CD8-positive, alpha-beta T cell (primary cell): ENCODE measurements at regions of chr2 and their contacts with region 1.

Region 1: GRCh38 chr2:227460070-227460485 is 11.9 kb upstream of the AGFG1 start:
- DNase-seq: peak; percentile 14 to 82 (median 65)
- ATAC-seq: peak; percentile 82
- H3K4me3 ChIP-seq: peak overlapping the region in 1 of 2 experiments; percentile 1
- H3K4me3 Mint-ChIP-seq: peak overlapping the region; percentile 15
- H3K27ac ChIP-seq: no peak overlapping the region
- H3K27ac Mint-ChIP-seq: no peak overlapping the region
- H3K4me1 ChIP-seq: peaks cover 52% of the 10 kb centered on the region
- H3K4me1 Mint-ChIP-seq: peaks cover 56% of the 10 kb centered on the region
- H3K27me3 ChIP-seq: peaks cover 0 to 2% of the 10 kb centered on the region in 2 experiments
- H3K27me3 Mint-ChIP-seq: no peaks in the 10 kb centered on the region
- CTCF ChIP-seq: no peak

Region 2: DNA sequence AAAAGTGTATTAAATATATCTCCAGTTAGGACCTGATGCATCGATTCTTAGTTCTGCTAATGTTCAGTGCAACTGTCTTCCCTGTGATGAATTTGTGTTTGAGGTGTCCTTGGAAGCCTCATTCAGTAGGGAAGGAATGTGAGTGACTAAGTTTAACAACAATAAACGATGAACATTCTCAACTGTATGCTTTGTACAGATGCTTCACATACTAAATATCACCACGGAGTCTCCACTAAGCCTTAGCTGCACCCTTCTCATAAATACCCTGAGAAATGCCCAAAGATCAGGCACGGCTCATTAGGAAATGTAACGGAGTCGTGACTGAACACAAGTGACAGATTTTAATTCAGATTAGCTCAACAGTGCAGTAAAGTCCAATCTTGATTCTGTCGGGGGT is 12.5 kb before region 1 on chr2:
- CTCF ChIA-PET with region 1: no interaction called
- POLR2A ChIA-PET with region 1: no interaction called
- intact Hi-C with region 1: no loop called
- DNase-seq: no peak
- ATAC-seq: no peak
- H3K4me3 ChIP-seq: no peak overlapping the region
- H3K4me3 Mint-ChIP-seq: no peak overlapping the region
- H3K27ac ChIP-seq: no peak overlapping the region
- H3K27ac Mint-ChIP-seq: no peak overlapping the region
- H3K4me1 ChIP-seq: no peaks in the 10 kb centered on the region
- H3K4me1 Mint-ChIP-seq: no peaks in the 10 kb centered on the region
- H3K27me3 ChIP-seq: no peaks in the 10 kb centered on the region
- H3K27me3 Mint-ChIP-seq: no peaks in the 10 kb centered on the region
- CTCF ChIP-seq: no peak

Region 3: GRCh38 chr2:227503433-227504406 is 43.6 kb after region 1 on chr2:
- CTCF ChIA-PET with region 1: no interaction called
- POLR2A ChIA-PET with region 1: no interaction called
- intact Hi-C with region 1: loop called in 1 of 2 experiments (anchors 5 kb)
- DNase-seq: no peak
- ATAC-seq: no peak
- H3K4me3 ChIP-seq: no peak overlapping the region
- H3K4me3 Mint-ChIP-seq: no peak overlapping the region
- H3K27ac ChIP-seq: no peak overlapping the region
- H3K27ac Mint-ChIP-seq: no peak overlapping the region
- H3K4me1 ChIP-seq: peaks cover 35% of the 10 kb centered on the region
- H3K4me1 Mint-ChIP-seq: peaks cover 76% of the 10 kb centered on the region
- H3K27me3 ChIP-seq: no peaks in the 10 kb centered on the region
- H3K27me3 Mint-ChIP-seq: no peaks in the 10 kb centered on the region
- CTCF ChIP-seq: no peak